ENCODE measurements at regions of chr10 and their contacts with region 1.

Region 1: GRCh38 chr10:119725828-119726675 is at the start of gene INPP5F:
- DNase-seq: peak; percentile 99
- H3K4me3 ChIP-seq: peak within 1 kb of the TSS; percentile 69 to 97 (median 95)
- H3K27ac ChIP-seq: peak within 1 kb of the TSS; percentile 90 to 97 (median 96)
- H3K4me1 ChIP-seq: peaks cover 28 to 45% (median 38%) of the 10 kb centered on the region in 4 donors
- H3K27me3 ChIP-seq: no peaks in the 10 kb centered on the region
- CTCF ChIP-seq: peak; percentile 18 to 38 (median 26)
- EP300 ChIP-seq: no peak
- POLR2A ChIP-seq: no peak
- total RNA-seq, gene INPP5F: 15.1 to 24.0 (median 19.0) TPM

Region 2: GRCh38 chr10:119686439-119687191 is 39.4 kb before region 1 on chr10:
- intact Hi-C with region 1: loop called (anchors 5 kb)
- DNase-seq: no peak
- H3K4me3 ChIP-seq: peak overlapping the region; percentile 18 to 40 (median 35)
- H3K27ac ChIP-seq: peak overlapping the region; percentile 12 to 62 (median 40)
- H3K4me1 ChIP-seq: peaks cover 20 to 23% (median 21%) of the 10 kb centered on the region in 4 donors
- H3K27me3 ChIP-seq: no peaks in the 10 kb centered on the region
- CTCF ChIP-seq: peak; percentile 90 to 96 (median 92)
- EP300 ChIP-seq: no peak
- POLR2A ChIP-seq: no peak

Measured in esophagus muscularis mucosa (tissue), 4 donors.